Heart left ventricle (tissue), 16 donors: ENCODE measurements at regions of chr3 and their contacts with region 1.

Region 1: DNA sequence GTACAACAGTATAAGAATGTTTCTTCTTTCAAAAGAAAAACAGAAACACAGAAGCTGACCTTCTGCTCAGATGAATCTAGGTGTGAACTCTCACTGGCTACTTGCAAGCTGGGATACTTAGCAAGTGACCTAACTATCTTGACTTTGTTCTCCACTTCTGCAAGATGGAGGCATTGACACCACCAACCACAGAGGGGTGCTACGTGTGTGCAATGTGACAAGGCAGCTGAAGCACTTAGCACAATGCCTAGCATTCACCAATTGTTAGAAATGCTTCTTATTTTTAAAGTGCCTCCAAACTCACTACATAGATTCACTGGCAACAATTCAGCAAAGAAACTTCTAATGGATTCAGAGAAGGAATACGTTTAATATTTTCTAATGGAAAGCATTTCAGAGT is 331.4 kb upstream of the WNT5A start:
- DNase-seq: no peak
- ATAC-seq: no peak
- H3K4me3 ChIP-seq: no peak overlapping the region
- H3K27ac ChIP-seq: no peak overlapping the region
- H3K4me1 ChIP-seq: no peaks in the 10 kb centered on the region
- H3K27me3 ChIP-seq: peaks cover 0 to 18% (median 0%) of the 10 kb centered on the region in 9 donors
- CTCF ChIP-seq: no peak
- POLR2A ChIP-seq: no peak

Region 2: DNA sequence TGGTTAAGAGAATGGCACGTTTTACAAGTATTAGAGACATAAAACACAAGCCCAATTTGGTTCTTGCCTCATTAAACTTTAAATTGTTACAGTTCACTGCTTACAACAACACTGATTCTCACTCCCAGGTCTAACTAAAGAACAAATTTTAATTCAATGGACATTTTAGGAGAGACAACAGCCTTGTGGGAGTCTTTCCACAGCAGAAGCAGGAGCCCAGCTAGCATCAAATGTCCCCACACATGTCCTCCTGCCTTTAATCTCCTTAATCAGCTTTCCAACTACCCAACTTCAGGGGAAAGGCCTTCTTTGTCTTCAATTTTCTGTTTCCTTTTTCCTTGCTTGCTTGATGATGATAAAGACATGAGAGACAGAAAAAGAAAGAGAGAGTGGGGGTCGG is 43.6 kb before region 1 on chr3:
- intact Hi-C with region 1: loop called in 1 of 10 experiments (anchors 5 kb)
- DNase-seq: no peak
- ATAC-seq: no peak
- H3K4me3 ChIP-seq: no peak overlapping the region
- H3K27ac ChIP-seq: no peak overlapping the region
- H3K4me1 ChIP-seq: no peaks in the 10 kb centered on the region
- H3K27me3 ChIP-seq: peaks cover 0 to 8% (median 0%) of the 10 kb centered on the region in 9 donors
- CTCF ChIP-seq: no peak
- POLR2A ChIP-seq: no peak

Region 3: DNA sequence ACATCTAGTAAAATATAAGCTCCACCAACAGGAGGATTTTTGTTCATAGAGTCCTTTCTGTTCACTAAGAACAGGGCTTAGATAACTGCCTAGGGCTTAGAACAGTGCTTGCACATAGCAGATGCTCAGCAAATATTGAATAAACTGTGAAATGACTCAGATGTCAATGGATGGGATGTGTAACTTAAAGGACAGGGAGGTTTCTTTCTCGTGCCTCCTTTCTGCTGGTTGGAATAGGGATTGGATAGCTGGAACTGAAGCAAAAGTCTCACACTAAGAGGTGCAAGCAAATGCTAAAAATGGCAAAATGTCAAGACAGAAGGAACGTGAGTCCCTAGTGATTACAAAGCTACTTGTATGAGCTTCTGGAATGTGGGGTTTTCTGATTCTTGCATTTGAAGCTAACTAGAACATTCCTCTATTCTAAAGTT is 61.4 kb after region 1 on chr3:
- intact Hi-C with region 1: loop called in 1 of 10 experiments (anchors 10 kb)
- DNase-seq: no peak
- ATAC-seq: no peak
- H3K4me3 ChIP-seq: no peak overlapping the region
- H3K27ac ChIP-seq: no peak overlapping the region
- H3K4me1 ChIP-seq: no peaks in the 10 kb centered on the region
- H3K27me3 ChIP-seq: peaks cover 0 to 16% (median 0%) of the 10 kb centered on the region in 9 donors
- CTCF ChIP-seq: no peak
- POLR2A ChIP-seq: no peak